ENCODE measurements at regions of chr20 and their contacts with region 1.

Region 1: GRCh38 chr20:59207742-59208357 is 44.2 kb downstream of the ZNF831 start:
- DNase-seq: peak; percentile 54 to 80
- H3K4me3 ChIP-seq: no peak overlapping the region
- H3K27ac ChIP-seq: no peak overlapping the region
- H3K4me1 ChIP-seq: peaks cover 2 to 9% (median 4%) of the 10 kb centered on the region in 4 experiments; a peak in 5 of 7 replicates
- H3K27me3 ChIP-seq: peaks cover 0 to 10% (median 1%) of the 10 kb centered on the region in 4 experiments; a peak in 2 of 7 replicates
- CTCF ChIP-seq: peak; percentile 85 to 92 (median 88)
- EP300 ChIP-seq: no peak
- POLR2A ChIP-seq: no peak
- RAD21 ChIP-seq: peak; percentile 94 to 96

Region 2: DNA sequence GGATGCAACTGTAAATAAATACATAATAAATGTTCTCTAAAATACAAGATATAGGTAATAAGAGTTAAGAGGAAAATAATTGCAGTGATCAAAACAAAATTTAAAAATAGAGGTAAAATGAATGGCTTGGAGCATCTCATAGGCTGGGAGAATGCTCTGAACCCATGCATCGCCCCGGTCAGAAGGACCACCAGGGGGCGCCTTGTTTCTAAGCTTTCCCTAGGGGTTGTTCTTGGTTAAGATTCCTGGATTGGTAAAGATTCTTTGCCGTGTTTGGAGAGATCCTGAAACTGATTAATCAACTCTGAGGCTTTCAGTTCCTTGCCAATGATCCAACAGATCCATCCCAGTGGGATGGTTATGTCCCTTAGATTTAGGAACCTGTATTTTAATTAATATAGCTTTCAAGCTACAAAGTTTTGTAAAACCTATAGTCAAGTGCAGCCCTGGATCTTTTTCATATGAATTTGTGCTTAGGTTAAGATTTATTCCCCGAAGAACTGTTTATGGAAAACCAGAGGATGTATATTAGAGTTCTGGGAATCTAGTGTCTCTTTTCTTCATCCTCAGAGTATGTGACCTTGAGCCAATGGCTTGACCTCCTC is 119.9 kb before region 1 on chr20:
- CTCF ChIA-PET with region 1: interaction called, 53 read pairs
- POLR2A ChIA-PET with region 1: no interaction called
- DNase-seq: peak; percentile 43 to 92
- H3K4me3 ChIP-seq: no peak overlapping the region
- H3K27ac ChIP-seq: no peak overlapping the region
- H3K4me1 ChIP-seq: no peaks in the 10 kb centered on the region
- H3K27me3 ChIP-seq: 0 out of 7 replicates have a peak, but pooled peaks cover 0 to 2% (median 0%) of the 10 kb centered on the region in 4 experiments
- CTCF ChIP-seq: peak; percentile 78 to 89 (median 79)
- EP300 ChIP-seq: no peak
- POLR2A ChIP-seq: no peak
- RAD21 ChIP-seq: peak; percentile 78 to 87

Region 3: DNA sequence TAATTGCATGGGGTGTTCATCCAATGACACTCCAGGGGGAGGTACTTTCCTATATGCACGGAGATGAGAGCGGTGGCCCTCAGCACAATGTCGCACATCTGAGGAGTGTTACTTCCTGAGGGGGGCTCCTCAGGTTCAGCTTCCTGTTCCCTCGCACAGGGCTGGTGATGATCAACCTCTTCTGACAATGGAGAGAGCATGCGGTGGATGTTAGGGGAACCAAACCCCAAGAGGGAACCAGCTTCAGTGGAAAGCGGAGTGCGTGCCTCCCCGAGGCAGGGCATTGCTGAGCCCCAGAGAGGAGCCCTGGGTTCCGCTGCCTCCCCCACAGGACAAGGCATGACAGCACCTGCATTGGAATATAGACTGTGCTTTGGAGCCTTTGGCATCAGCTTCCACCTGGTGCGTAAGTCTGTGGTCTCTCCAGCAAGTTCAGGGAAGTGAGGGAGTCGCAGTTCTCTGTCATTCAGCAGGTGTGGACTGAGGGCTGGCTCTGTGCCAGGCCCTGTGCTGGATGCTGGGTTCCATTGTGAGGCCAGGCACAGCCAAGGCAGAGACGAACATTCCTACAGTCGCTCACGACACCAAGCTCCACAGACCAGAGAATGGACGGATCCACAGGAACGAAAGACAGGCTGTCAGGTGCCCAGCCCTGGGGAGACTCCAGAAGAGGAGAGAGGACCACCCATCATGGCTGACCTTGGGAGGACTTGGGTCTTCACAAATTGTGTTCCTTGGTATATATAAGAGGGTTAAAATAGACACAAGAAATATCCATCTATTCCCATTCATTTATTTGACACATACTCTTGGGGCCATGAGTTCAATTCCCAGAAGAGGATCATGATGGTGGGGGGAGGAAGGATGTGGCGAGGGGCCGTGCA is 48.1 kb before region 1 on chr20:
- CTCF ChIA-PET with region 1: interaction called, 12 read pairs
- POLR2A ChIA-PET with region 1: no interaction called
- DNase-seq: no peak
- H3K4me3 ChIP-seq: no peak overlapping the region
- H3K27ac ChIP-seq: no peak overlapping the region
- H3K4me1 ChIP-seq: peaks cover 2 to 6% (median 4%) of the 10 kb centered on the region in 4 experiments; a peak in 6 of 7 replicates
- H3K27me3 ChIP-seq: no peaks in the 10 kb centered on the region
- CTCF ChIP-seq: no peak
- EP300 ChIP-seq: no peak
- POLR2A ChIP-seq: no peak
- RAD21 ChIP-seq: no peak

Region 4: DNA sequence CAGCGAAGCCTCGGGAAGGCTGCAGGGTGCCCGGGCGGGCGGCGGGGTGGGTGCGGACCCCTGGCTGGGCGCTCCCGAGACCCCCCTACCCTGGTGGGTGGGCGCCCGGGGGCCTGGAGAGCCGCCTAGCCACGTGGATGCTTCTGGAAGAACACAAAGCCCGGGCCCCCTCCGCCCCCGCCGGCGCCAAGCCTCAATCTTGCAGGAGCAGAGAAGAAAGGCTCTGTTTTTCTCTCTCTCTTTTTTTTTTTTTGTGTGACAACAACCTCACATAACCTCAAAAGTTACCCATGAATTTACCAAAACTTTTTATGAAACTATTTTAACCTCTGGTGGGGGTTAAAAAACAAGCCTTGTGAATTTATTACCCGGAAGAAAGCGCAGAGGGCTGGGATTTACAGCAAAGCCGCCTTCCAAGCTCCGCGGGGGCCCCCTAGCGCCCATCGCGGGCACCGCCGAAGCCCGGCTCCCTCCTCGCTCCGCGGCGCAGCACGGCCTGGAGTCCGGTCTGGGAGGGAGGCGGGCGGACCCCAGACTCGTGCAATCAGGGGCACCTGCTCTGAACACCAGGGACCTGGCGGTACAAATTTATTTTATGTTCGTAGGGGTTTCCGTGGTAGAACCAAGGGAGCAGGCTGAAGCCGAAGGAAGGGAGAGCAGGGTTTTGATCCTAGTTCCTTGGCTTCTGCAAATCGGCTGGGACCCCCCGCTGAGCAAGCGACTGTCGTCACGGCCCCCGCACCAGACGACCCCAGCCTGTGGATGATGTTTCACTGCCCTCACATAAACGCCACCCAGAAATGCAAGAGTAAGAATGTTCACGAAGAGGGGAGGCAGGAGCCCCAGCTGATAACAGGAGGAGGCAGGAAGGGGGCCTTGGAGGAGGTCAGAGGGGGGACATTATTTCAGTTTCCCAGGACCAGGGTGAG is 14.7 kb after region 1 on chr20:
- CTCF ChIA-PET with region 1: interaction called, 26 read pairs
- POLR2A ChIA-PET with region 1: no interaction called
- DNase-seq: peak; percentile 53 to 97
- H3K4me3 ChIP-seq: peak overlapping the region; percentile 37 to 70 (median 50); a peak in 6 of 8 replicates
- H3K27ac ChIP-seq: no peak overlapping the region
- H3K4me1 ChIP-seq: peaks cover 2 to 6% (median 4%) of the 10 kb centered on the region in 4 experiments
- H3K27me3 ChIP-seq: peaks cover 3 to 22% (median 20%) of the 10 kb centered on the region in 4 experiments
- CTCF ChIP-seq: peak; percentile 74 to 81 (median 79)
- EP300 ChIP-seq: no peak
- POLR2A ChIP-seq: no peak
- RAD21 ChIP-seq: peak; percentile 84 to 87

Region 5: GRCh38 chr20:59403261-59403961 is 195.6 kb after region 1 on chr20:
- CTCF ChIA-PET with region 1: interaction called, 11 read pairs
- POLR2A ChIA-PET with region 1: no interaction called
- DNase-seq: peak; percentile 13 to 98
- H3K4me3 ChIP-seq: peak overlapping the region; percentile 27 to 63 (median 58)
- H3K27ac ChIP-seq: no peak overlapping the region
- H3K4me1 ChIP-seq: peaks cover 0 to 8% (median 2%) of the 10 kb centered on the region in 4 experiments; a peak in 5 of 7 replicates
- H3K27me3 ChIP-seq: peaks cover 0 to 22% (median 16%) of the 10 kb centered on the region in 4 experiments; a peak in 6 of 7 replicates
- CTCF ChIP-seq: peak; percentile 92 to 93 (median 93)
- EP300 ChIP-seq: no peak
- POLR2A ChIP-seq: no peak
- RAD21 ChIP-seq: peak; percentile 96 to 98